ENCODE measurements at regions of chr5 and their contacts with region 1.

Region 1: GRCh38 chr5:87412630-87413342 is at the start of gene CCNH:
- DNase-seq: peak; percentile 98
- ATAC-seq: peak; percentile 100
- H3K4me3 Mint-ChIP-seq: peak within 1 kb of the TSS; percentile 93
- H3K27ac Mint-ChIP-seq: peak within 1 kb of the TSS; percentile 94
- H3K4me1 Mint-ChIP-seq: peaks cover 34% of the 10 kb centered on the region
- H3K27me3 Mint-ChIP-seq: no peaks in the 10 kb centered on the region
- CTCF ChIP-seq: no peak
- total RNA-seq, gene CCNH: 68.7 to 76.1 TPM

Region 2: GRCh38 chr5:87267574-87268125 is 145.1 kb before region 1 on chr5 and contains the start of gene RASA1:
- CTCF ChIA-PET with region 1: interaction called, 3 read pairs
- POLR2A ChIA-PET with region 1: no interaction called
- intact Hi-C with region 1: loop called (anchors 5 kb)
- DNase-seq: peak; percentile 84
- ATAC-seq: peak; percentile 81
- H3K4me3 Mint-ChIP-seq: peak within 1 kb of the TSS; percentile 100
- H3K27ac Mint-ChIP-seq: peak within 1 kb of the TSS; percentile 99
- H3K4me1 Mint-ChIP-seq: peaks cover 21% of the 10 kb centered on the region
- H3K27me3 Mint-ChIP-seq: no peaks in the 10 kb centered on the region
- CTCF ChIP-seq: no peak
- total RNA-seq, gene RASA1: 17.6 to 19.3 TPM

Region 3: DNA sequence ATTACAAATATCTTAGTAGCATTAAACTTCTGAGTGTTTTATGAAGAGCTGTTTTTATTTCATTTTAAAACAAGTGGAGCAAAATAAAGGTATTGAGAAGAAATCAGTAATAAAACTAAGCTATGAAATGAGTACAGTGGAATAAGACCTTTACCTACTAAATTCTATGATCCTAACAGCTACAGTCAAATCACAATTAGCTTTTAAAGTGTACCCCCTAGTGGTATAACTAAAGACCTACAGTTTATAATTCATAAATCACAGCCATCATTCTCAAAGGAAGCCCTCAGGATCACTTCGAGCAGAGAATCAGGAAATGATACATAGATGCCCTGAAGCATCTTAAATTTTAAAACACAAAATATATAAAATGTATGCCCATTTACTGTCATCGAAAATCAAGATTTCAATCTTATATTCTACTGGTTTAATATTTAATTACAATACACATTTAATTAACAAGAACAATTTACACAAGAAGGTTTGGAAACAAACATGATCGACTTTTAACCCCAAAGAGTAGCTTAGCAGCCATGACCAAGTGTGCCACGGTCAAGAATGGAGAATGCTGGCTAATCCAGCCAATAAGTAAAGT is 12.4 kb before region 1 on chr5:
- CTCF ChIA-PET with region 1: interaction called, 16 read pairs
- POLR2A ChIA-PET with region 1: interaction called, 5 read pairs
- intact Hi-C with region 1: no loop called
- DNase-seq: no peak
- ATAC-seq: peak; percentile 86
- H3K4me3 Mint-ChIP-seq: no peak overlapping the region
- H3K27ac Mint-ChIP-seq: no peak overlapping the region
- H3K4me1 Mint-ChIP-seq: peaks cover 34% of the 10 kb centered on the region
- H3K27me3 Mint-ChIP-seq: no peaks in the 10 kb centered on the region
- CTCF ChIP-seq: peak; percentile 72